ENCODE measurements at regions of chr1 and their contacts with region 1.

Region 1: DNA sequence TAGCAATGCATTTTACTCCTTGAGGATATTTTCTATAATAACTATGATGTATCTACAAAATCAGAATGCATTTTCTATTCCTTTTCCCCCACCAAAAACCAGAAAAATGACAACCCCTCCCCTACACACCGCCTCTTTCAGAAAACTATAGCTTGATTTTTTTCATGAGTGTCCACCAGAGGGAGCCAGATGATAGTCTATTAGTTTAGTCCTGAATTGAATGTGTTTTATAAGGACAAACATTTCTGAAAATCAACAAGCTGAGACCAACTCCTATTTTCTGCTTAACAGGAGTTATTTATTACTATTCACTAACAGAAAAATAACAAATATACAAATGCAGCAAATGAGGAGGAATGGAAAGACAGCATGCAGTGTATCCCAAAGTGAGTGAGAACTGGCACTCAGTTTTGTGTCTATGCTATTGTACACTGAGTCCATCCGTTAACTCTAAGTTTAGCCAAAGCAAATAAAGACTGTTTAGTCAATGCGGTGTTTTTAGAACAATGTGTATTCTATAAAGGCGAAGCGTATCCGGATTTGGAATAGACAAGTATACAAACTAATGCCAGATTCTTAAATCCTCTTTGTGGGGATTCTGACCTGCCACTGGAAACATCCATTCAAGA is 182.6 kb downstream of the VAV3 start:
- DNase-seq: no peak
- ATAC-seq: peak; percentile 47 to 60

Region 2: GRCh38 chr1:107963601-107964335 is 181.4 kb after region 1 on chr1:
- intact Hi-C with region 1: loop called in 1 of 2 experiments (anchors 10 kb)
- DNase-seq: peak; percentile 42
- ATAC-seq: peak; percentile 13 to 47

Region 3: GRCh38 chr1:108125312-108126138 is 343.2 kb after region 1 on chr1:
- intact Hi-C with region 1: loop called (anchors 1 to 2 kb)
- DNase-seq: peak; percentile 68
- ATAC-seq: peak; percentile 93

Measured in left cardiac atrium (tissue), 4 donors.